ENCODE measurements at regions of chr6 and their contacts with region 1.

Region 1: DNA sequence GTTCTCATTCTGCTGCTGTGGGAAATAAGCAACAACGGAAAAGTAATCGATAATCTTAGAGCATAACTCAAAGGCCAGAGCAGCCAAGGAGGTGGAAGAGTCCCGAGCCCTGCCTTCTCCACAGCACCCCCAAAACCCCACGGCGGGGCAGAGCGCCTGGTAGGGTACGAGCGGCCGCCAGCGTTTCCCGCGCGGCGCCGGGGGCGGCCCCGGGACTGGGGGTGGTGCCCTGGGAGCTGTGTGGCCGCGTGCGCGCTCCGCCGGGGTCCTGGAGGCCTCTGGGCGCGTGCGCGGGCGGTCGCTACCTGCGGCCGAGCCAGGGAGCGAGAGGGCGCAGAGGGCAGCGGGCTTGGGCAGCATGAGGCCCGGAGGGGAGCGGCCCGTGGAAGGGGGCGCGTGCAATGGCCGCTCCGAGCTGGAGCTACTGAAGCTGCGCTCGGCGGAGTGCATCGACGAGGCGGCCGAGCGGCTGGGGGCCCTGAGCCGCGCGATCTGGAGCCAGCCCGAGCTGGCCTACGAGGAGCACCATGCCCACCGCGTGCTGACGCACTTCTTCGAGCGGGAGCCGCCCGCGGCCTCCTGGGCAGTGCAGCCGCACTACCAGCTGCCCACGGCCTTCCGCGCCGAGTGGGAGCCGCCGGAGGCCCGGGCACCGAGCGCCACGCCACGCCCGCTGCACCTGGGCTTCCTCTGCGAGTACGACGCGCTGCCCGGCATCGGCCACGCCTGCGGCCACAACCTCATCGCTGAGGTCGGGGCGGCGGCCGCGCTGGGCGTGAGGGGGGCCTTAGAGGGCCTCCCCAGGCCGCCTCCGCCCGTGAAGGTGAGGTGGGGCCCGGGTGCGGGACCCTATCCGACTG is at the start of gene PM20D2:
- H3K4me3 ChIP-seq: peak within 1 kb of the TSS; percentile 83
- H3K27ac ChIP-seq: peak within 1 kb of the TSS; percentile 93
- H3K4me1 ChIP-seq: peaks cover 20% of the 10 kb centered on the region
- CTCF ChIP-seq: no peak; the same call in 1 of the 2 replicates

Region 2: GRCh38 chr6:89098461-89098860 is 47.6 kb before region 1 on chr6:
- CTCF ChIA-PET with region 1: no interaction called
- POLR2A ChIA-PET with region 1: no interaction called
- H3K4me3 ChIP-seq: no peak overlapping the region
- H3K27ac ChIP-seq: no peak overlapping the region
- H3K4me1 ChIP-seq: no peaks in the 10 kb centered on the region
- CTCF ChIP-seq: no peak

Region 3: DNA sequence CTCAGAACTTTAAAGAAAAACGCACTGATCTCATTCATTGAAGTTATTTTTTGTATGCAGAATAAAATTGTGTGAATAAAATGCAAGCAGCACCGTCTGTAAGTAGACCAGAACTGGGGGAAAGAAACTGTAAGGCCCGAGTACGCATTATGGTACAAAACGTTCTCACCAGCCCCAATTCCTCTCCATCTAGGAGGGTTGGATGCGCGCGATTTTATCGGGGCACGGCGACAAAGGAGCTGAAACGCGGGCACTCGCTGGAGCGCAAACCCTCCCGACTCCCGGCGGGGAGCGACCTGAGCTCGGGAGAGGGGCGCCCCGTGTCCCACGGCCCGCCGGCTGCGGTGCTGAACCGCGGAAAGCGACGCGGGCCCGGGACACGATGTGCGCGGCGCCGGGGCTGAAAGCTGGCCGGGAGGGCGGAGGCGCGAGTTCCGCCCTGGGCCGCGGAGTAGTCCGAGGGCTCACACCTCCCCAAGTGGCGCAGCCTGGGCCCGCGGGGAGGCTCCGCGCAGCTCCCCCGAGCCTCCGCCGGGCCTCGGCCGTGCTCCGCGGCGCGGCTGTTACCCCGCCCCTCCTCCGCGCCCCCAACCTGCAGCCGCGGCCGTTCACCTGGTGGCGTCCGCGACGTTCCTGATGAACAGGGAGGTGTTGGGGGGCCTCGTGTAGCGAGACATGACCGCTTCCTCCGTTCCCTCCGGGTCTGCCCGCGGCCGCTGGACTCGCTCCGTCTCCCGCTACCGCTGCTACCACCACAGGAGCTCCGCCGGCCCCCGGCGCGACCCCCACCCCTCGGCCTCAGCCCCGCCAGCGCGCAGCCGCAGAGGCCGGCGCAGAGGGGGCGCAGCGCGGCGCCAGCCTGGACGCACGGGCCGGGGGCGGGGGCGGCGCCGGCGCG is 28.6 kb before region 1 on chr6 and contains the start of gene SRSF12:
- CTCF ChIA-PET with region 1: interaction called, 24 read pairs
- POLR2A ChIA-PET with region 1: interaction called, 11 read pairs
- H3K4me3 ChIP-seq: peak within 1 kb of the TSS; percentile 58
- H3K27ac ChIP-seq: peak within 1 kb of the TSS; percentile 65; the same call in 1 of the 2 replicates
- H3K4me1 ChIP-seq: peaks cover 3% of the 10 kb centered on the region; the same call in 1 of the 2 replicates
- CTCF ChIP-seq: no peak; the same call in 1 of the 2 replicates

Region 4: GRCh38 chr6:89134723-89135122 is 11.3 kb before region 1 on chr6:
- CTCF ChIA-PET with region 1: interaction called, 5 read pairs
- POLR2A ChIA-PET with region 1: interaction called, 10 read pairs
- H3K4me3 ChIP-seq: no peak overlapping the region
- H3K27ac ChIP-seq: no peak overlapping the region
- H3K4me1 ChIP-seq: peaks cover 19% of the 10 kb centered on the region
- CTCF ChIP-seq: no peak

Region 5: DNA sequence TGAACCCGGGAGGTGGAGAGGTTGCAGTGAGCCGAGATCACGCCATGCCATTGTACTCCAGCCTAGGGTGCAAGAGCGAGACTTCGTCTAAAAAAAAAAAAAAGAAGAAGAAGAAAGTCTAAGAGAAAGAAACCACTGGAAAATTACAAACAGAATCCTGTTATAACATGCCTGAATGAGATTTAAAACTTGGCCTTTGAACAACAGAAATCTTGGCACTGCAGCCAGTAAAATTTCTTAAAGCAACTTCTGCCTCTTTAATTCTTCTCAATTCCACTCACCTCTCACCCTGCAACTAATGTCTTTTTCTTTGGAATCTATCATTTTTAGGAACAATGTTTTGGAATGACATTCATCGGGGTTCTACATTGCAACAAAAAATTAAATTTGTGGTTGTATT is 26.1 kb after region 1 on chr6:
- CTCF ChIA-PET with region 1: no interaction called
- POLR2A ChIA-PET with region 1: no interaction called
- H3K4me3 ChIP-seq: no peak overlapping the region
- H3K27ac ChIP-seq: no peak overlapping the region
- H3K4me1 ChIP-seq: no peaks in the 10 kb centered on the region
- CTCF ChIP-seq: no peak

Region 6: GRCh38 chr6:89398762-89399525 is 252.9 kb after region 1 on chr6:
- CTCF ChIA-PET with region 1: no interaction called
- POLR2A ChIA-PET with region 1: no interaction called
- H3K4me3 ChIP-seq: no peak overlapping the region
- H3K27ac ChIP-seq: no peak overlapping the region
- H3K4me1 ChIP-seq: no peaks in the 10 kb centered on the region
- CTCF ChIP-seq: no peak